ENCODE measurements at regions of chr12 and their contacts with region 1.

Region 1: GRCh38 chr12:122965851-122966722 is at the start of gene ABCB9:
- DNase-seq: peak; percentile 79 to 97 (median 89)
- ATAC-seq: peak; percentile 95 to 96
- H3K4me3 Mint-ChIP-seq: peak within 1 kb of the TSS; percentile 63 to 85 (median 74)
- H3K27ac Mint-ChIP-seq: peak within 1 kb of the TSS in 9 of 10 donors; percentile 31 to 91 (median 73)
- H3K4me1 Mint-ChIP-seq: peaks cover 6 to 14% (median 8%) of the 10 kb centered on the region in 4 donors
- H3K27me3 Mint-ChIP-seq: no peaks in the 10 kb centered on the region
- polyA plus RNA-seq, gene ABCB9: 0.45 to 1.4 (median 0.80) TPM

Region 2: DNA sequence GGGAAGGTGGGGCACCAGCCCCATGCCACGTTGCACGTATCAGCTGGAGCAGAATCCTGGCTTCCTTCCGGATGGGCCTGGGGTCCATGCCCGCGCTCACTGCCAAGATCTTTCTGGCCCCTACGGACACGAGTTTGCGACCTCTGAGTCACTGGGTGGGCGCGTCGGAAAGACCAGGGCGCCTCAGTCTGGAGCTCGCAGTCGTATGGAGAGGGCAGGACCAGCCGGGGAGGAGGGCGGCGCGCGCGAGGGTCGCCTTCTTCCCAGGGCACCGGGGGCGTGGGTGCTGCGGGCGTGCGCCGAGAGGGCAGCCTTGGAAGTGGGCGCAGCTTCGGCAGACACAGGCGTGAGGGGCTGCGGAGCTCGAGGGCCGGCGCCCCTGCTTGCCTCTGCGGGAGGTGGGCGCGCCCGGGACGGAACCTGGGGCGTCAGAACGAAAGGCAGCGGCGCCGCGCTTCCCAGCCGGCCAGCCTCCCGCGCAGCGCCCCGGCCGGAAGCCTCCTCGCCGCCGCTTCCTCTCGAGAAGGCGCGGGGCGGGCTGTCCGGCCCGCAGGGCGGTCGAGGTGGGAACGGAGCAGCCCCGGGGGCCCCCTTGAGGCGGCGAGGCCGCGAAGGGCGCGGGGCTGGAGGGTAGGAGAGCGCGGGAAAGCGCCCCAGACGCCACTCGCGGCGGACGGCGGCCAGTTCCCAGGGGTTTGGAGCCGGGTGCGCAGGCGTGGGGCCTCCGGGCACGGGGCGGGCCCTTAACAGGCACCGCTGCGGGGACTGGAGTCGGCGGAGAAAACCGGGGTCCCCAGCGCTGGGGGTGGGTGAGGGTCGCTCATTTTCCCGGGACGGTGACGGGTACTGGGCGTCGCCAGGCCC is 14.3 kb after region 1 on chr12 and contains the start of gene ARL6IP4:
- POLR2A ChIA-PET with region 1: interaction called, 20 read pairs
- DNase-seq: peak; percentile 42 to 79 (median 60)
- ATAC-seq: peak; percentile 78
- H3K4me3 Mint-ChIP-seq: peak within 1 kb of the TSS; percentile 85 to 92 (median 89)
- H3K27ac Mint-ChIP-seq: peak within 1 kb of the TSS; percentile 75 to 93 (median 90)
- H3K4me1 Mint-ChIP-seq: peaks cover 24 to 80% (median 68%) of the 10 kb centered on the region in 4 donors
- H3K27me3 Mint-ChIP-seq: no peaks in the 10 kb centered on the region
- polyA plus RNA-seq, gene ARL6IP4: 209 to 256 (median 222) TPM

Measured in naive thymus-derived CD8-positive, alpha-beta T cell (primary cell).